ENCODE measurements at regions of chr20 and their contacts with region 1.

Region 1: GRCh38 chr20:34312544-34313217 is 9.5 kb upstream of the AHCY start:
- DNase-seq: peak; percentile 74
- ATAC-seq: peak; percentile 100
- H3K4me3 Mint-ChIP-seq: no peak overlapping the region
- H3K27ac Mint-ChIP-seq: no peak overlapping the region
- H3K4me1 Mint-ChIP-seq: peaks cover 7% of the 10 kb centered on the region
- H3K27me3 Mint-ChIP-seq: peaks cover 19% of the 10 kb centered on the region
- CTCF ChIP-seq: peak; percentile 90

Region 2: DNA sequence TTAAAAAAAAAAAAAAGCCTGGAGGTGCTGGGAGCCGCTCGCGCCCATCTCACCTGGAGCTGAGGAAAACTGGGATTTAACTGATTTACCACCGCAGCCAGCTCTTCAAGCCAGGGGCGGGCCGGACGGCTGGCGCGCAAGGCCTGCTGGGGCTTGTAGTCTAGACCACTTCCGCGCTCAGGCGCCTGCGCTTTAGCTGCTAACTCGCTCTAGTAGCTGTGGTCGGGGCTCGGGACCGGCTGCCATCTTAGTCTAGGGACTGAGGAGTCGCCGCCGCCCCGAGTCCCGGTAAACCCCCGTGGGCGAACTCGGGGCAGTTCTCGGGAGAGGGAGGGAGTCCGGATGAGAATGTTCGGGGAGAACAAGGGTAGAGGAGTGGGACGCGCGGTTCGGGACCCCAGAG is 50.4 kb after region 1 on chr20 and contains the start of gene ITCH:
- CTCF ChIA-PET with region 1: interaction called, 17 read pairs
- POLR2A ChIA-PET with region 1: interaction called, 8 read pairs
- intact Hi-C with region 1: no loop called
- DNase-seq: peak; percentile 88
- ATAC-seq: peak; percentile 96
- H3K4me3 Mint-ChIP-seq: peak within 1 kb of the TSS; percentile 100
- H3K27ac Mint-ChIP-seq: peak within 1 kb of the TSS; percentile 99
- H3K4me1 Mint-ChIP-seq: peaks cover 41% of the 10 kb centered on the region
- H3K27me3 Mint-ChIP-seq: peaks cover 1% of the 10 kb centered on the region
- CTCF ChIP-seq: no peak
- total RNA-seq, gene ITCH: 62.6 and 66.3 TPM in 2 replicates

Region 3: DNA sequence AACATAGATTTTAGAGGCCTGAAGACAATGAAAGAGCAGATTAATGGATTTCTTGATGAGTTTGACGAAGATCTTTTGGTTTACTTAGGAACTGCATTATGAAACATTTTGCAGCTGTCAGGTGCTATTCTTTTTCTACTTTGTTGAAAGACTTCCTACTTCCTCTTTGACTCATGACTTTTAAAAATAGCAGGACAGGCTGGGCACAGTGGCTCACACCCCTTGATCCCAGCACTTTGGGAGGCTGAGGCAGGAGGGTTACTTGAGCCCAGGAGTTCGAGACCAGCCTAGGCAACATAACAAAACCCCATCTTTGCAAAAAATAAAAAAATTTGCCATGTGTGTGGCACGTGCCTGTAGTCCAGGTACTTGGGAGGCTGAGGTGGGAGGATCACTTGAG is 102.4 kb after region 1 on chr20:
- CTCF ChIA-PET with region 1: interaction called, 16 read pairs
- POLR2A ChIA-PET with region 1: no interaction called
- intact Hi-C with region 1: loop called (anchors 5 kb)
- DNase-seq: no peak
- ATAC-seq: peak; percentile 49
- H3K4me3 Mint-ChIP-seq: peak overlapping the region; percentile 36
- H3K27ac Mint-ChIP-seq: peak overlapping the region; percentile 79
- H3K4me1 Mint-ChIP-seq: peaks cover 21% of the 10 kb centered on the region
- H3K27me3 Mint-ChIP-seq: no peaks in the 10 kb centered on the region
- CTCF ChIP-seq: no peak

Region 4: DNA sequence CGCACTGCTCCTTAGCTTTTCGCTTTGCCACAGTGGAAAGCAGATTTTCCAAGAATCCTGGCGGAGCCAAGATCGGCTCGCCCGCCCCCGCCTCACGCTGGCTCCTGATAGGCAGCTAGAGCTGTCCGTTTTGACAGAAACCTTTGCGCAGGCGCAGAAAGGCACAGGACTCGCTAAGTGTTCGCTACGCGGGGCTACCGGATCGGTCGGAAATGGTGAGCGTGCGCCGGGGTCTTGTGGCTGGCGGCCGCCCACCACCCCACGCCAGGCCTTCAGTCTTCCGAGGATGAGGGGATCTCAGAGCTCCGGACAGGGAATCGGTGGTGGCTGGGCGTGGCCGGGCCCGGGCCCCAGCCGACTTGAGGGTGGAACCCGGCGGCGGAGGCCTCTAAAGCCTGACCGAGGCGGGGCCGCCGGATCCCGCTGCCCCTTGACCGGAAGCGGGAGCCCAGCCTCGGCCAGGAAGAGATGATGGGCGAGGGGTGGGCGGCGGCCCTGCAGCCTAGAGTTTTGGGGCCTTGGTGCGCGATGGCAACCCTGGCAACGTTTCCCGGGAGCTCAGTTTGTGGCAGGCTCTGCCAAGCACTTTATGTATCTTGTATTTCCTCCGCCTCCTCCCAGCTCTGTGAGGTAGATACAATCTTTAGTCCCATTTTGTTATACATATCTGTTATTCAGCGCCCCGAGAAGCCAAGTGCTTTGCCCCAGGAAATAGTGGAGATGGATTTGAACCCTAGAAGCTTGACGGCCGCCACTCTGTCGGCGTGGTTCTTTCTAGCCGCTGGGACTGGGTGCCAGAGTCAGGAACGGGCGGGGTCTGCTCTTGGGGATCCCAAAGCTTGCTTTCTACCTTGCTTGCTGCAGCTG is 203.8 kb after region 1 on chr20 and contains the start of gene DYNLRB1:
- CTCF ChIA-PET with region 1: interaction called, 31 read pairs
- POLR2A ChIA-PET with region 1: interaction called, 4 read pairs
- intact Hi-C with region 1: no loop called
- DNase-seq: peak; percentile 88
- ATAC-seq: peak; percentile 82
- H3K4me3 Mint-ChIP-seq: peak within 1 kb of the TSS; percentile 98
- H3K27ac Mint-ChIP-seq: peak within 1 kb of the TSS; percentile 96
- H3K4me1 Mint-ChIP-seq: peaks cover 48% of the 10 kb centered on the region
- H3K27me3 Mint-ChIP-seq: no peaks in the 10 kb centered on the region
- CTCF ChIP-seq: no peak
- total RNA-seq, gene DYNLRB1: 62.7 and 65.9 TPM in 2 replicates

Region 5: GRCh38 chr20:34538671-34539123 is 226.0 kb after region 1 on chr20:
- CTCF ChIA-PET with region 1: interaction called, 3 read pairs
- POLR2A ChIA-PET with region 1: no interaction called
- intact Hi-C with region 1: loop called (anchors 5 kb)
- DNase-seq: peak; percentile 37
- ATAC-seq: peak; percentile 61
- H3K4me3 Mint-ChIP-seq: no peak overlapping the region
- H3K27ac Mint-ChIP-seq: no peak overlapping the region
- H3K4me1 Mint-ChIP-seq: peaks cover 15% of the 10 kb centered on the region
- H3K27me3 Mint-ChIP-seq: no peaks in the 10 kb centered on the region
- CTCF ChIP-seq: no peak

Measured in activated B cell treated with CpG ODN at 0.5 μM for 24 hours (primary cell).